A549 (cell line): ENCODE measurements at regions of chr14 and their contacts with region 1.

Region 1: GRCh38 chr14:64823305-64823861 is 56.3 kb downstream of the SPTB start:
- DNase-seq: peak; percentile 78 to 95
- ATAC-seq: peak; percentile 96 to 99
- H3K4me3 ChIP-seq: no peak overlapping the region
- H3K27ac ChIP-seq: peak overlapping the region; percentile 44 to 76; a peak in 4 of 6 replicates
- H3K4me1 ChIP-seq: peaks cover 7% of the 10 kb centered on the region; the same call in 1 of the 3 replicates
- CTCF ChIP-seq: peak; percentile 81
- EP300 ChIP-seq: no peak
- POLR2A ChIP-seq: no peak
- RAD21 ChIP-seq: peak; percentile 73 to 83

Region 2: DNA sequence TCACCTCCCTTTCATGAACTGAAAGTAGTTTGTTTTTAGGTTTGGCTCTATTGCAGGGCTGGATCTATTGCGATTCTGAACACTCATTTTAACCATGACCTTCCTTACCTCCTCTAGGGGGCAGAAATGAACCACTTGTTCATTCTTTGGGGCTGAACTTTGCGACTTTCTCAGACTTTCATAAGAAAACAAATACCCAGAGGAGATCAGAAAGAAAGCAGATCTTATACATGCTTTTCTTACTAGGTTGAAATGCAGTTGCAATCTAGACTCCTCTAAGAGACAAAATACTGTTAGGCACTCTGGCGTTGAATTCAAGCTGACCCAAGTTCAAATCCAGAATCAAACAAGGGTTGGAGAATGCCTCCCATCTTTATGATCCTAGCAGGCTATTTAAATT is 151.8 kb before region 1 on chr14:
- CTCF ChIA-PET with region 1: interaction called, 10 read pairs
- POLR2A ChIA-PET with region 1: no interaction called
- DNase-seq: peak; percentile 72 to 80
- ATAC-seq: peak; percentile 74 to 87; a peak in 5 of 6 replicates
- H3K4me3 ChIP-seq: no peak overlapping the region
- H3K27ac ChIP-seq: peak overlapping the region; percentile 75 to 79
- H3K4me1 ChIP-seq: peaks cover 37% of the 10 kb centered on the region
- CTCF ChIP-seq: peak; percentile 87
- EP300 ChIP-seq: no peak
- POLR2A ChIP-seq: no peak
- RAD21 ChIP-seq: peak; percentile 94

Region 3: GRCh38 chr14:64812217-64812811 is 11.1 kb before region 1 on chr14:
- CTCF ChIA-PET with region 1: interaction called, 49 read pairs
- POLR2A ChIA-PET with region 1: no interaction called
- DNase-seq: no peak
- ATAC-seq: peak in 1 of 2 experiments; percentile 35; a peak in 1 of 6 replicates
- H3K4me3 ChIP-seq: no peak overlapping the region
- H3K27ac ChIP-seq: peak overlapping the region in 1 of 2 experiments; percentile 44; a peak in 3 of 6 replicates
- H3K4me1 ChIP-seq: peaks cover 21% of the 10 kb centered on the region
- CTCF ChIP-seq: no peak
- EP300 ChIP-seq: no peak
- POLR2A ChIP-seq: no peak
- RAD21 ChIP-seq: no peak

Region 4: GRCh38 chr14:64848239-64848638 is 24.9 kb after region 1 on chr14:
- CTCF ChIA-PET with region 1: interaction called, 13 read pairs
- POLR2A ChIA-PET with region 1: no interaction called
- DNase-seq: no peak
- ATAC-seq: no peak
- H3K4me3 ChIP-seq: no peak overlapping the region
- H3K27ac ChIP-seq: no peak overlapping the region
- H3K4me1 ChIP-seq: no peaks in the 10 kb centered on the region
- CTCF ChIP-seq: no peak
- EP300 ChIP-seq: no peak
- POLR2A ChIP-seq: no peak
- RAD21 ChIP-seq: no peak

Region 5: GRCh38 chr14:64880221-64881121 is 57.1 kb after region 1 on chr14:
- CTCF ChIA-PET with region 1: interaction called, 250 read pairs
- POLR2A ChIA-PET with region 1: no interaction called
- DNase-seq: peak; percentile 40 to 73
- ATAC-seq: peak; percentile 79 to 91
- H3K4me3 ChIP-seq: peak overlapping the region; percentile 85
- H3K27ac ChIP-seq: peak overlapping the region; percentile 65 to 82
- H3K4me1 ChIP-seq: no peaks in the 10 kb centered on the region
- CTCF ChIP-seq: no peak
- EP300 ChIP-seq: no peak
- POLR2A ChIP-seq: no peak
- RAD21 ChIP-seq: no peak

Region 6: GRCh38 chr14:64914237-64914971 is 91.0 kb after region 1 on chr14 and contains the start of gene CHURC1:
- CTCF ChIA-PET with region 1: interaction called, 27 read pairs
- POLR2A ChIA-PET with region 1: no interaction called
- DNase-seq: peak; percentile 92 to 99
- ATAC-seq: peak; percentile 97 to 99
- H3K4me3 ChIP-seq: peak within 1 kb of the TSS; percentile 98
- H3K27ac ChIP-seq: peak within 1 kb of the TSS; percentile 89 to 99
- H3K4me1 ChIP-seq: peaks cover 30% of the 10 kb centered on the region
- CTCF ChIP-seq: no peak
- EP300 ChIP-seq: no peak
- POLR2A ChIP-seq: peak; percentile 89
- RAD21 ChIP-seq: no peak
- polyA plus RNA-seq, gene CHURC1: 115 and 153 TPM in 2 replicates